ENCODE measurements at regions of chr20 and their contacts with region 1.

Region 1: GRCh38 chr20:1622450-1622849 is 2.6 kb upstream of the SIRPB1 start:
- DNase-seq: peak in 5 of 9 donors; percentile 15 to 49 (median 42)
- ATAC-seq: peak; percentile 53
- H3K4me3 ChIP-seq: no peak overlapping the region
- H3K4me3 Mint-ChIP-seq: peak overlapping the region; percentile 7 to 70 (median 51)
- H3K27ac ChIP-seq: peak overlapping the region; percentile 31
- H3K27ac Mint-ChIP-seq: peak overlapping the region in 8 of 9 donors; percentile 68 to 91 (median 84)
- H3K4me1 ChIP-seq: peaks cover 31 to 52% of the 10 kb centered on the region in 2 donors
- H3K4me1 Mint-ChIP-seq: peaks cover 57 to 95% (median 89%) of the 10 kb centered on the region in 7 donors
- H3K27me3 ChIP-seq: no peaks in the 10 kb centered on the region
- H3K27me3 Mint-ChIP-seq: no peaks in the 10 kb centered on the region

Region 2: DNA sequence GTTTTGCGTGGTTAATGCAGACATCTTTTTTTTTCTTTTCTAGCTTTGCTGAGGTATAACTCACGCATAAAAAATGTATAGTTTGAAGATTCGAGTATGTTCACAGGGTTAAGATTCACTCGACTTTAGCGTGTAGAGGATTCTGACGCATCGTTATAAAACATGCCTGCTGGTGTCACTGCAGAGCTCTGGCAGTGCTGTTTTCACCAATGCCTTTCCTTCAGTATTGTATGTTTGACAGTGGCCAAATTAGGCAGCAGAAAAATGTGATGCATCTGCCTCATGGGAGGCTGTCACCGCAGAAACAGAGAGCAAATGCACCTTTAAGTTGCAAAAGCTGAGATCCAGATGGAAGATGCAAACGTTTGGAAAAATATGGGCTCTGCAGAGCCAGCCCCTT is 113.2 kb before region 1 on chr20:
- CTCF ChIA-PET with region 1: no interaction called
- POLR2A ChIA-PET with region 1: no interaction called
- intact Hi-C with region 1: loop called in 1 of 2 experiments (anchors 1 kb)
- DNase-seq: peak in 7 of 9 donors; percentile 4 to 48 (median 34)
- ATAC-seq: peak; percentile 81
- H3K4me3 ChIP-seq: no peak overlapping the region
- H3K4me3 Mint-ChIP-seq: no peak overlapping the region
- H3K27ac ChIP-seq: no peak overlapping the region
- H3K27ac Mint-ChIP-seq: no peak overlapping the region
- H3K4me1 ChIP-seq: no peaks in the 10 kb centered on the region
- H3K4me1 Mint-ChIP-seq: no peaks in the 10 kb centered on the region
- H3K27me3 ChIP-seq: no peaks in the 10 kb centered on the region
- H3K27me3 Mint-ChIP-seq: peaks cover 0 to 42% (median 7%) of the 10 kb centered on the region in 5 donors

Measured in naive thymus-derived CD4-positive, alpha-beta T cell (primary cell).